ENCODE measurements at regions of chr5 and their contacts with region 1.

Region 1: GRCh38 chr5:54678737-54679136 is 161.2 kb downstream of the SNX18 start:
- DNase-seq: no peak
- ATAC-seq: no peak
- H3K4me3 ChIP-seq: no peak overlapping the region
- H3K27ac ChIP-seq: peak overlapping the region; percentile 44; the same call in 1 of the 2 replicates
- H3K4me1 ChIP-seq: peaks cover 18% of the 10 kb centered on the region
- H3K27me3 ChIP-seq: no peaks in the 10 kb centered on the region
- CTCF ChIP-seq: no peak
- POLR2A ChIP-seq: no peak
- RAD21 ChIP-seq: no peak

Region 2: DNA sequence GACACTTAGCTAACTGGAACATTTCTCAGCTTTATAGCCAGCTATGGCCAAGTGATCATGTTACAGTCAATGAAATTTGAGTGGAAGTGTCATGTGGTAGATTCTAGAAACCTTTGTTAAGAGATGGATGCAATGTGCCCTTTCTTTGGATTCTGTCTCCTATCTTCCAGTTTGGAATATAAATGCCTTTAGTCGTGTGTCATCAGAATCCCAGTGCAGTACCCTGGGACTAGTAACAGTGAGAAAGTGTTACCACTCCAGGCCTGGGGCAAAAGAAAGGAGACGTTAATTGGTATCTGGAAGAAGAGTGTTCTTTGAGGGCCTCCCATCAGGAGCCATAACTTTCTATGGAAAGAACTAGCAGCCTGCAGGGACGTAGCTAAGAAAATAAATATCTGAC is 11.6 kb before region 1 on chr5:
- CTCF ChIA-PET with region 1: no interaction called
- POLR2A ChIA-PET with region 1: no interaction called
- dilution Hi-C with region 1: no loop called
- in situ Hi-C with region 1: no loop called
- intact Hi-C with region 1: no loop called
- DNase-seq: peak; percentile 28
- ATAC-seq: no peak
- H3K4me3 ChIP-seq: no peak overlapping the region
- H3K27ac ChIP-seq: peak overlapping the region; percentile 35; the same call in 1 of the 2 replicates
- H3K4me1 ChIP-seq: peaks cover 27% of the 10 kb centered on the region
- H3K27me3 ChIP-seq: no peaks in the 10 kb centered on the region
- CTCF ChIP-seq: no peak
- POLR2A ChIP-seq: no peak
- RAD21 ChIP-seq: no peak

Region 3: GRCh38 chr5:54696931-54697330 is 18.2 kb after region 1 on chr5:
- CTCF ChIA-PET with region 1: interaction called, 3 read pairs
- POLR2A ChIA-PET with region 1: no interaction called
- dilution Hi-C with region 1: no loop called
- in situ Hi-C with region 1: no loop called
- intact Hi-C with region 1: loop called (anchors 2 kb)
- DNase-seq: no peak
- ATAC-seq: no peak
- H3K4me3 ChIP-seq: no peak overlapping the region
- H3K27ac ChIP-seq: peak overlapping the region; percentile 73
- H3K4me1 ChIP-seq: peaks cover 17% of the 10 kb centered on the region
- H3K27me3 ChIP-seq: no peaks in the 10 kb centered on the region
- CTCF ChIP-seq: no peak
- POLR2A ChIP-seq: no peak
- RAD21 ChIP-seq: no peak